A673 (cell line): ENCODE measurements at regions of chr11 and their contacts with region 1.

Region 1: DNA sequence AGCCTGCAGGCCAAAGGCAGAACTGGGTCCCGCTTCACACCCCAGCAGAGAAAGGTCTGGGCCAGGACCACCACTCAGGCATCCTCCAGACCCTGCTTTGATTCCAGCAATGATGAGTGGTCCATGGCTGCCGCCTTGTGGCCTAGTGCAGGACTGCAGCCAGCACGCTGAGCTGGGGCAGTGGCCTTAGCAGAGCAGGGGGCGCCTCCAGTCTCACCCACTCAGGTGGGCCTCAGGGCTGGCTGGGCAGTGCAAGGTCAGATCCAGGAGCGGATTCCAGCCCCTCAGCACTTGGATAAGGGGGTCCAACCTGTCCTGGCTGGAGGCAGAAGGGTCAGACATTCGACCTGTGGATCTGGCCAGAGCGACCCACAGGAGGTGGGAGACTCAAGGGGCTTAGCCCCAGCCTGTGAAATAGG is 9.6 kb upstream of the PDE2A start:
- DNase-seq: peak; percentile 68
- H3K4me3 ChIP-seq: no peak overlapping the region
- H3K27ac ChIP-seq: no peak overlapping the region
- H3K4me1 ChIP-seq: no peaks in the 10 kb centered on the region
- H3K27me3 ChIP-seq: peaks cover 5% of the 10 kb centered on the region
- CTCF ChIP-seq: peak; percentile 97

Region 2: GRCh38 chr11:72363112-72363511 is 320.7 kb before region 1 on chr11:
- CTCF ChIA-PET with region 1: interaction called, 10 read pairs
- POLR2A ChIA-PET with region 1: no interaction called
- intact Hi-C with region 1: no loop called
- DNase-seq: no peak
- H3K4me3 ChIP-seq: no peak overlapping the region
- H3K27ac ChIP-seq: no peak overlapping the region
- H3K4me1 ChIP-seq: no peaks in the 10 kb centered on the region
- H3K27me3 ChIP-seq: no peaks in the 10 kb centered on the region
- CTCF ChIP-seq: no peak

Region 3: GRCh38 chr11:72471005-72471898 is 212.5 kb before region 1 on chr11:
- CTCF ChIA-PET with region 1: interaction called, 33 read pairs
- POLR2A ChIA-PET with region 1: no interaction called
- intact Hi-C with region 1: no loop called
- DNase-seq: peak; percentile 90
- H3K4me3 ChIP-seq: no peak overlapping the region
- H3K27ac ChIP-seq: no peak overlapping the region
- H3K4me1 ChIP-seq: no peaks in the 10 kb centered on the region
- H3K27me3 ChIP-seq: peaks cover 19% of the 10 kb centered on the region
- CTCF ChIP-seq: peak; percentile 96

Region 4: GRCh38 chr11:72483412-72484186 is 200.2 kb before region 1 on chr11:
- CTCF ChIA-PET with region 1: interaction called, 4 read pairs
- POLR2A ChIA-PET with region 1: no interaction called
- intact Hi-C with region 1: loop called (anchors 5 kb)
- DNase-seq: peak; percentile 64
- H3K4me3 ChIP-seq: no peak overlapping the region
- H3K27ac ChIP-seq: no peak overlapping the region
- H3K4me1 ChIP-seq: no peaks in the 10 kb centered on the region
- H3K27me3 ChIP-seq: peaks cover 4% of the 10 kb centered on the region
- CTCF ChIP-seq: no peak

Region 5: GRCh38 chr11:72585762-72586311 is 98.0 kb before region 1 on chr11:
- CTCF ChIA-PET with region 1: interaction called, 26 read pairs
- POLR2A ChIA-PET with region 1: no interaction called
- intact Hi-C with region 1: loop called (anchors 1 kb)
- DNase-seq: peak; percentile 77
- H3K4me3 ChIP-seq: no peak overlapping the region
- H3K27ac ChIP-seq: no peak overlapping the region
- H3K4me1 ChIP-seq: no peaks in the 10 kb centered on the region
- H3K27me3 ChIP-seq: peaks cover 37% of the 10 kb centered on the region
- CTCF ChIP-seq: peak; percentile 98

Region 6: DNA sequence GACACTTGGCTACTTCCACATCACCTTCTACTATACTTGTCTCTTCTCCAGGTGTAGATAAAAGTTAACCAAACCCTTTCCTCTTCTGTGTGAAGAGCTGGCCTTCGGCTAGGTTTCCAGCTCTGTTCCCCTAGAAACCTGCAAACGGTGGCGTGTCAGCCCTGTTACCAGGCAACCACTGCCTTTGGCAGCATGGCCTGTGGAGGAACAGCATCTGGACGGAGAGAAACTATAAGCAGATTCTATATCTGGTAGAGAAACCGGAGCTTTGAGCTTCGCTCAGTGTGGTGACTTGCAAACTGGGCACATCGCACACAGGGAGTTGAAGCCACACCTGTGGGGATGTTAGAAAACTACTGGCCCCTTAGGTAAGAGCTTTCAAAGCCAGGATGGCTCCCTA is 32.5 kb after region 1 on chr11:
- CTCF ChIA-PET with region 1: interaction called, 10 read pairs
- POLR2A ChIA-PET with region 1: no interaction called
- intact Hi-C with region 1: no loop called
- DNase-seq: no peak
- H3K4me3 ChIP-seq: no peak overlapping the region
- H3K27ac ChIP-seq: no peak overlapping the region
- H3K4me1 ChIP-seq: peaks cover 10% of the 10 kb centered on the region
- H3K27me3 ChIP-seq: no peaks in the 10 kb centered on the region
- CTCF ChIP-seq: no peak

Region 7: GRCh38 chr11:72840780-72841179 is 157.0 kb after region 1 on chr11:
- CTCF ChIA-PET with region 1: no interaction called
- POLR2A ChIA-PET with region 1: no interaction called
- intact Hi-C with region 1: no loop called
- DNase-seq: peak; percentile 30
- H3K4me3 ChIP-seq: no peak overlapping the region
- H3K27ac ChIP-seq: no peak overlapping the region
- H3K4me1 ChIP-seq: no peaks in the 10 kb centered on the region
- H3K27me3 ChIP-seq: no peaks in the 10 kb centered on the region
- CTCF ChIP-seq: no peak